PC-9 (cell line): ENCODE measurements at regions of chr6 and their contacts with region 1.

Region 1: DNA sequence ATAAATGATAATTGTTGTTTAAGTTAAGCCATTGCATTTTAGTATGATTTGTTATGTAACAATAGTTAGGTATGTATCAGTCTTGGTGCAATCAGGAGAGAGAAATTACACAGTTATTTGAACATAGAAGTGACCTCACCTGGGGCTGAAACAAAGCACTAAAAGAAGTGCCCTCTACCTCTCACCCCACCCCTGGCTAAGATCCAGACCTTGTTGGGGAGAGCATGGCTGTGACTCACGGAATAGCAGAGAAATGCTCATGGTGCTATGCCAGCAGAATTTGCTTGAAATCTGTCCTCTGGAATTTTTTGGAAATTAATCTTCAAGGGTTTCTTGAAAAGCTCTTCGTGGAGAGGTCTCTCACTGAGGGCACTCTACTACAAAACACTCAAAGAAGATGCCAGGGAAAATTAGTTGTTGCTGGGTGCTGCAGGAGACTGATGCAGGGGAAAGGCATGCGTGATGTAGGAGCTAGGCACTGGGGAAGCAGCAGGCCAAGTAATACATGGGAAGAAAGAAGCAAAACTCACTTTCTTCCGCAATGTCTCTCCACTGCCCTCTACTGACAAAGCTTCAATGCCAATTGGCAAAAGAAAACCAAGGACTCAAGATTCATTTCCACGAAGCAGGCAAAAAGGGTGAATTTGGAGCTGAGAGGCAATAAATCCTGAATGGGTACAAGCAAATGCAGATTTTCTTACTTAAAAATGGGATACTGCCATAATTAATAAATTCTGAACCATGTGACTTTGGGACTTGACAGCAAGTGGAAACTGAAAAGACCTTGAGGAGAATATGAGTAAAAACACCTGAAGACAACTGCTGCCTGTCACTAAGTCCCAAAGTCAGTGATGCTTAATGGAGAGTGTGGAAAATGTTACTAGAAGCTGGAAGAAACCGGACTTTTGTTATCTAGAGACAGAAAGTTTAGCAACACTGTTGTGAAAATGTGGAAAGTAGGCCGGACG is 136.3 kb upstream of the ZNF184 start:
- DNase-seq: peak; percentile 68 to 71
- H3K4me3 ChIP-seq: no peak overlapping the region
- H3K27ac ChIP-seq: no peak overlapping the region
- H3K4me1 ChIP-seq: 0 out of 2 replicates have a peak, but pooled peaks cover 8% of the 10 kb centered on the region
- H3K27me3 ChIP-seq: no peaks in the 10 kb centered on the region
- CTCF ChIP-seq: peak; percentile 77

Region 2: DNA sequence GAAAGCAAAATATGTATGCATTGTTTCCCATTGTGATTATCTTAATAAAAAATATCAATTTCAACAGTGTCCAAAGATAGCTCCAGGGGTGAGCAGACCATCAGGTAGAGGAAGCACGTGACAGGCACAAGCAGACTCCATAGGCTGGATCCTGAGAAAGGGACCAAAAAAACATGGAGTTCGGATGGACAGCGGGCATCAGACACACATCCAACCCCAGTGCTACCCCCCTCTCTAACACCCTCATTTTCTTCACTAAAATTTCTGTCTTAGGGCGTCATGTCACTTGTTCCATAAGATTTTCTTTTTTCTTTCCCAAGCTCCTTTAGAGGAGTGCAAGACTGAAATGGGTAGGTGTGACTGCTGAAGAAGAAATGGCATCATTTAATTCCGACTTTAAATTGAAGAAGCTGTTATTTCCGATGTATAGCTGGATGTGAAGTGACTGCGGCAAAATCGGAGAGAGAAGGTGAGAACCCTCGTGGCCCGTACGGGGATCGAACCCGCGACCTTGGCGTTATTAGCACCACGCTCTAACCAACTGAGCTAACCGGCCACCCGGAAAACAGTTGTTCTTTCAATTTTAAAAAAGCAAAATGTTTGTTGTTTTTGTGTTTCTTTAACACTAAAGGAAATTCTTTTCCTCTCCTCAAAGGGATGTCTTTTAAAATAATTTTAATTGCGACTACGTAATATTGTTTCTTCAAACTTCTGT is 372.0 kb before region 1 on chr6:
- CTCF ChIA-PET with region 1: no interaction called
- POLR2A ChIA-PET with region 1: no interaction called
- intact Hi-C with region 1: loop called (anchors 5 kb)
- DNase-seq: peak; percentile 54 to 56
- H3K4me3 ChIP-seq: peak overlapping the region; percentile 39
- H3K27ac ChIP-seq: no peak overlapping the region
- H3K4me1 ChIP-seq: peaks cover 13% of the 10 kb centered on the region; the same call in 1 of the 2 replicates
- H3K27me3 ChIP-seq: no peaks in the 10 kb centered on the region; the same call in 1 of the 2 replicates
- CTCF ChIP-seq: no peak

Region 3: DNA sequence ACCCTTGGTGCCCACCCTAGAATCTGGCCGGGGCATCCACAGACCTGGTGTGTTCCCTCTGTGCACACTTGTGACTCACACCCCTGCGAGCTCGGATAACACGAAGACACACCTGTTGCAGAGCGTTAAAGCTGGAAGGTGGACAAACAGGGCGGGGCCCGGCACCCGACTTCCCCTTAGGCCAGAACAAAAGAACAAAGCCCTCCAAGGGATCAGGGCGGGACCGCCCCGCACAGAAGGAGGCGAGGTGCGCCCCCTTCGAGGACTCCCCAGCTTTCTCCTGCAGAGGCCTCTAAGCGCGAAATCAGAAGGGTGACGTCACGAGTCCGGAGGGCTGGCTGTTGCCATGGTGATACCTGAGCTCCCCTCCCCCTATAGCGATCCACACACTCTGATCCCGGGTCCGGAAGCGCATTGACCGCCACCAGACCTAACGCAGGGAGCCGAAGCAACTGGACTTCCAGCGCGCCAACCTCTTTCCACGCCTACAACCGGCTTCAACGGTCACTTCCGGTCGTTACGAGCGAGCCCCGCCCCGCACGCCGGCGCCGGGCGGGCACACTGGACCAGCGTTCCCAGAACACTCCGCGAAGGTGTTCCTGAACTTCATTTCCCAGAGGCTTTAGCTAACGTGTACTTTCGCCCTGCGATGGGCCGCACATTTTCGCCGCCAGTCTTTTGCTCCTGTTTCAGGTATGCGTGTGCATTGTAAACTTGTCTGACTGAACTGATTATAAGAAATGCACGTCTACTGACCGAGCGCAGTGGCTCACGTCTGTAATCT is 136.4 kb before region 1 on chr6 and contains the start of gene ZNF184:
- CTCF ChIA-PET with region 1: no interaction called
- POLR2A ChIA-PET with region 1: no interaction called
- intact Hi-C with region 1: loop called (anchors 1 kb)
- DNase-seq: peak; percentile 94 to 98
- H3K4me3 ChIP-seq: peak within 1 kb of the TSS; percentile 91
- H3K27ac ChIP-seq: peak within 1 kb of the TSS; percentile 79
- H3K4me1 ChIP-seq: peaks cover 12% of the 10 kb centered on the region; the same call in 1 of the 2 replicates
- H3K27me3 ChIP-seq: no peaks in the 10 kb centered on the region
- CTCF ChIP-seq: peak; percentile 19; the same call in 1 of the 2 replicates
- total RNA-seq, gene ZNF184: 7.0 and 8.8 TPM in 2 replicates

Region 4: GRCh38 chr6:27547157-27548075 is 61.8 kb before region 1 on chr6:
- CTCF ChIA-PET with region 1: interaction called, 3 read pairs
- POLR2A ChIA-PET with region 1: no interaction called
- intact Hi-C with region 1: loop called (anchors 2 kb)
- DNase-seq: peak; percentile 46 to 66
- H3K4me3 ChIP-seq: peak overlapping the region; percentile 64
- H3K27ac ChIP-seq: peak overlapping the region; percentile 37
- H3K4me1 ChIP-seq: no peaks in the 10 kb centered on the region; the same call in none of the 2 replicates
- H3K27me3 ChIP-seq: no peaks in the 10 kb centered on the region
- CTCF ChIP-seq: no peak

Region 5: DNA sequence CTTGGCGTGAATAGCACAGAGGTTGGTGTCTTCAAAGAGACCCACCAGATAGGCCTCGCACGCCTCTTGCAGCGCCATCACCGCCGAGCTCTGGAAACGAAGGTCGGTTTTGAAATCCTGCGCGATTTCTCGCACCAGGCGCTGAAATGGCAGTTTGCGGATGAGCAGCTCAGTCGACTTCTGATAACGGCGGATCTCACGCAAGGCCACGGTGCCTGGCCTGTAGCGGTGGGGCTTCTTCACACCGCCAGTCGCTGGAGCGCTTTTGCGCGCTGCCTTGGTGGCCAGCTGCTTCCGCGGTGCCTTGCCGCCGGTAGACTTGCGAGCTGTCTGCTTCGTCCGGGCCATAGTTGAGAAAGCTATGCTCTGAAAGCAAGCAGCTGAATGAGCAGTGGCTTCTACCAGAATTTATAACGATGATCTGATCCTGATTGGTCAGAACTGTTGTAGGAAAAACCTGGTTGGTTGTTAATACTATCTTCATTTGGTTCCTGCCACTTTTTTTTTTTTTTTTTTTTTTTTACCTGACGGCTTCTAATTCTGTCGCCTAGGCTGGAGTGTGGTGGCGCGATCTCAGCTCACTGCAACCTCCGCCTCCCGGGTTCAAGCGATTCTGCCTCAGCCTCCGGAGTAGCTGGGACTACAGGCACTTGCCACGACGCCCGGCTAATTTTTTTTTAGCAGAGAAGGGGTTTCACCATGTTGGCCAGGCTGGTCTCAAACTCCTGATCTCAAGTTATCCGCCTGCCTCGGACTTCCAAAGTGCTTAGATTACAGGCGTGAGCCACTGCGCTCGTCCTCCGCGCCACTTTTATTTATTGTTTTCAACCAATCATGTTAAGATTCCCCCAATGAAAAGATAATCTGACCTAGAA is 281.5 kb after region 1 on chr6:
- CTCF ChIA-PET with region 1: no interaction called
- POLR2A ChIA-PET with region 1: no interaction called
- intact Hi-C with region 1: no loop called
- DNase-seq: peak; percentile 66 to 84
- H3K4me3 ChIP-seq: peak overlapping the region; percentile 80
- H3K27ac ChIP-seq: peak overlapping the region; percentile 73; the same call in 1 of the 2 replicates
- H3K4me1 ChIP-seq: no peaks in the 10 kb centered on the region; the same call in 1 of the 2 replicates
- H3K27me3 ChIP-seq: no peaks in the 10 kb centered on the region
- CTCF ChIP-seq: no peak

Region 6: DNA sequence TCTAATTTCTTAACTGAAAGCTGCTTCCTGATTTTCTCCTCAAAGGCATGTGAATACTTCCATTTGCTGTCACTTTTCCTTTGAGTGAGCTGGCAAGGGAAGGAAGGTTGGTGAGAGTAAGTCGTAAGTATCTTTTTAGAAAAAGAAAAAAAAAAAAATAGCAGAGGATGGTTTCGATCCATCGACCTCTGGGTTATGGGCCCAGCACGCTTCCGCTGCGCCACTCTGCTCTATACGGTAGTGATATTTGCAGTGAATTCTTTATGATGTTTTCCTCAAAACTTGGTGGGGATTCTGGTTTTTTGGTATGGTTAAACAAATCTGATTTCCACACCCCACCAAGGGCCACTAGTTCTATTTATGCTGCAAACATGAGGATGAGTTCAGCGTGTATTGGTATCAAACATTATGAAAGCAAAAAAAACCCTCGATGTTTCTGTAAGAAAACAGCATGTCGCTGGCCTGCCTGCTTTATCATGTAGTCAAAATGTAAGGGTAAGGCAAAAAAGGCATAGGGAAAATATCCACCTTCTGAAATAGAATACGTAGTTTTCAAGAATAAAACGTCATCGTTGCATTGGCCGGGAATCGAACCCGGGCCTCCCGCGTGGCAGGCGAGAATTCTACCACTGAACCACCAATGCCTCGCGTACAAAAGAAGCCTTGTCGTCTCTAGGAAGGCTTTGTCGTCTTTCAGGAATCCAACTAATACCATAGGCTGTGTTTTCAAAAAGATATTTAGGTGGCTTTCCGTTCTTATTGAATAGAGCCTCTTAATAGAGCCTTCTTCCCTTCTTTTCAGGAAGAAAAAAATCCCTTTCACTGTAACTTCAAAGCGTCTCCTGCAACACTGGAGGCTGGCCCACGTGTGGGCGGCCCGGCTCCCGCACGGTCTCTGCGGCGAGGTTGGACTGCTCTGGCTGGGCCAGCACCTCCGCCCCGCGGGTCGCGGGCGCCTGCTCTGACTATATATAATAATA is 293.4 kb after region 1 on chr6:
- CTCF ChIA-PET with region 1: no interaction called
- POLR2A ChIA-PET with region 1: no interaction called
- intact Hi-C with region 1: loop called (anchors 5 kb)
- DNase-seq: peak; percentile 76 to 86
- H3K4me3 ChIP-seq: peak overlapping the region; percentile 73
- H3K27ac ChIP-seq: peak overlapping the region; percentile 74
- H3K4me1 ChIP-seq: peaks cover 9% of the 10 kb centered on the region
- H3K27me3 ChIP-seq: no peaks in the 10 kb centered on the region
- CTCF ChIP-seq: no peak